CD8-positive, alpha-beta memory T cell (primary cell): ENCODE measurements at regions of chr7 and their contacts with region 1.

Region 1: DNA sequence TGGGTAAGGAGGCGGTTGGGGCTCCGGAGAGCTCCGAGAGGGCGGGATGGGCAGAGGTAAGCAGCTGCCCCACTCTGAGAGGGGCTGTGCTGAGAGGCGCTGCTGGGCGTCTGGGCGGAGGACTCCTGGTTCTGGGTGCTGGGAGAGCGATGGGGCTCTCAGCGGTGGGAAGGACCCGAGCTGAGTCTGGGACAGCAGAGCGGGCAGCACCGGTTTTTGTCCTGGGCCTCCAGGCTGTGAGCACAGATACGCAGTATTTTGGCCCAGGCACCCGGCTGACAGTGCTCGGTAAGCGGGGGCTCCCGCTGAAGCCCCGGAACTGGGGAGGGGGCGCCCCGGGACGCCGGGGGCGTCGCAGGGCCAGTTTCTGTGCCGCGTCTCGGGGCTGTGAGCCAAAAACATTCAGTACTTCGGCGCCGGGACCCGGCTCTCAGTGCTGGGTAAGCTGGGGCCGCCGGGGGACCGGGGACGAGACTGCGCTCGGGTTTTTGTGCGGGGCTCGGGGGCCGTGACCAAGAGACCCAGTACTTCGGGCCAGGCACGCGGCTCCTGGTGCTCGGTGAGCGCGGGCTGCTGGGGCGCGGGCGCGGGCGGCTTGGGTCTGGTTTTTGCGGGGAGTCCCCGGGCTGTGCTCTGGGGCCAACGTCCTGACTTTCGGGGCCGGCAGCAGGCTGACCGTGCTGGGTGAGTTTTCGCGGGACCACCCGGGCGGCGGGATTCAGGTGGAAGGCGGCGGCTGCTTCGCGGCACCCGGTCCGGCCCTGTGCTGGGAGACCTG is 26.0 kb downstream of the PRSS2 start:
- DNase-seq: no peak
- H3K4me3 ChIP-seq: peak overlapping the region; percentile 79
- H3K4me3 Mint-ChIP-seq: peak overlapping the region; percentile 92 to 100 (median 100)
- H3K27ac ChIP-seq: peak overlapping the region; percentile 95
- H3K27ac Mint-ChIP-seq: peak overlapping the region; percentile 94 to 100 (median 100)
- H3K4me1 ChIP-seq: peaks cover 57% of the 10 kb centered on the region
- H3K4me1 Mint-ChIP-seq: peaks cover 61 to 73% (median 69%) of the 10 kb centered on the region in 3 donors
- H3K27me3 ChIP-seq: no peaks in the 10 kb centered on the region
- H3K27me3 Mint-ChIP-seq: peaks cover 0 to 16% of the 10 kb centered on the region in 2 donors

Region 2: DNA sequence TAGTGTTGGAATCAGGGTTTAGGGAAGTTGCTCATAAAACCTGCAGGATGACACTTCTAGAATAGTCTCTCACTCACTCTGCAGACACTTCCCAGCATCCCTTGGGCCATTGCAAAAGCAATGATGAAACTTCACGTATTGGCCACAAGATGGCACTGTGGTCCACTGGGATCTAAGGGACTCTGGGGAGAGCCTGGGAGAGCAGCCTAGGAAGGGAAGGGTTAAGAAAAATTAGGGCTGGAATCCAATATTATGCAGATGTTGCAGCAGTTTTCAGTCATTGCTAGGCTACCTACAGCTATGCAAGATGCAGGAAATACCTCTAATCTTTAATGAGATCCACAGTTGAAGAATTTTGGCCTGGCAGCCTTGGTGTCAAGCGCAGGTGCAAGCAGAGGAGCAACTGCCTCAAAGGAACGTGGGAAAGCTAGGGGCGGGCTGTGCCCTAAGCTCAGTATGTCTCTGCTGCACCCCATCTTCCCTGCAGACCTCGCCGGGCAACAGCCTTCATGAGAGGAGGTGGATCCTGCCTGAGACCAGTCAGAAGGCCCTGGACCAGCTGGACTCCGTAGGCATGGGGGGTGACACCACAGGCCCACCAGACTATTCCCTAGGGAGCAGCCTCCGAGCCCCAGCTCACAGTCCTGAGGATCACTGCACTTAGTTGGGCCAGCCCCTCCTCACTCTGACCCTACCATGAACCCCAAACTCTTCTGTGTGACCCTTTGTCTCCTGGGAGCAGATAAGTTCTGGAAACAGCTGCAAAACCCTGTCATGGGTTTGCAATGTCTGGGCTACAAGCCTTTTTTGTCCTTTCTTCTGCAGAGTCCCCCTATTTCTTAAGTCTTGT is 411.1 kb before region 1 on chr7:
- CTCF ChIA-PET with region 1: interaction called, 3 read pairs
- POLR2A ChIA-PET with region 1: interaction called, 11 read pairs
- DNase-seq: peak in 3 of 5 donors; percentile 4 to 61 (median 35)
- H3K4me3 ChIP-seq: no peak overlapping the region
- H3K4me3 Mint-ChIP-seq: peak overlapping the region in 1 of 7 donors; percentile 49
- H3K27ac ChIP-seq: no peak overlapping the region
- H3K27ac Mint-ChIP-seq: peak overlapping the region in 2 of 8 donors; percentile 2 to 46
- H3K4me1 ChIP-seq: peaks cover 18% of the 10 kb centered on the region
- H3K4me1 Mint-ChIP-seq: peaks cover 19 to 27% (median 20%) of the 10 kb centered on the region in 3 donors
- H3K27me3 ChIP-seq: no peaks in the 10 kb centered on the region
- H3K27me3 Mint-ChIP-seq: no peaks in the 10 kb centered on the region

Region 3: DNA sequence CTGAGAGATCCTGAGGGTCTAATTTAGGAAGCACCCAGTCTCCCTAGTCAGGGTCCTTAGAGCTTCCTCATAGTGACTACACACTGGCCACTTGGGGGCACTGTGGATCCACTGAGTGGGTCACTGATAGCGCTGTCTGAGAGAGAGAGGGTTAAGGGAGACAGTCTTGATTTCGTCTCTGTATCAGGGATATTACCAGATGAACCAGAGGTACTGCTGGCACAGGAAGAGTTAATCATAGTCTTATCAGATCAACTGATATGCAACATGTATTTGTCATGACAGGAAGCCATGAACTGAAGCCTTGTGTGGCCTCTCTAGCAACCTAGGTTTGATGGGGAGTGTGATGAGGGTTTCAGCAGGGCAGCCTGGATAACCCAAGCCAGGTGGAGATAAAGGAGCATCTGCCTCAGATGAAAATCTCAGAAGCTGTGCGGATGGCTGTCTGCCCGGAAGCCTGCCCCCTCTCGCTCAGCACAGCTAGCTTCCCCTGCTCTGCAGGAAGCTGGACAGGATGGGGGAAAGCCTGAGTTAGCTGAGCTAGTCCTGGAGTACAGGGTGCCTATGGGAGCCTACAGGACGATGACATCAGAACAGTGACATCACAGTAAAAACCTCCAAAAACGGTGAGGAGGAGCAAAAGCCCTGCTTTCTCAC is 261.5 kb before region 1 on chr7:
- CTCF ChIA-PET with region 1: no interaction called
- POLR2A ChIA-PET with region 1: interaction called, 10 read pairs
- DNase-seq: peak; percentile 28 to 78 (median 46)
- H3K4me3 ChIP-seq: peak overlapping the region; percentile 19
- H3K4me3 Mint-ChIP-seq: peak overlapping the region; percentile 48 to 78 (median 61)
- H3K27ac ChIP-seq: no peak overlapping the region
- H3K27ac Mint-ChIP-seq: peak overlapping the region in 6 of 8 donors; percentile 17 to 89 (median 52)
- H3K4me1 ChIP-seq: peaks cover 9% of the 10 kb centered on the region
- H3K4me1 Mint-ChIP-seq: peaks cover 11 to 23% (median 22%) of the 10 kb centered on the region in 3 donors
- H3K27me3 ChIP-seq: no peaks in the 10 kb centered on the region
- H3K27me3 Mint-ChIP-seq: no peaks in the 10 kb centered on the region

Region 4: GRCh38 chr7:142554560-142555532 is 242.0 kb before region 1 on chr7:
- CTCF ChIA-PET with region 1: interaction called, 4 read pairs
- POLR2A ChIA-PET with region 1: interaction called, 10 read pairs
- DNase-seq: no peak
- H3K4me3 ChIP-seq: no peak overlapping the region
- H3K4me3 Mint-ChIP-seq: peak overlapping the region in 2 of 7 donors; percentile 10 to 32
- H3K27ac ChIP-seq: no peak overlapping the region
- H3K27ac Mint-ChIP-seq: peak overlapping the region in 2 of 8 donors; percentile 5 to 71
- H3K4me1 ChIP-seq: no peaks in the 10 kb centered on the region
- H3K4me1 Mint-ChIP-seq: peaks cover 0 to 6% (median 5%) of the 10 kb centered on the region in 3 donors
- H3K27me3 ChIP-seq: no peaks in the 10 kb centered on the region
- H3K27me3 Mint-ChIP-seq: peaks cover 0 to 10% of the 10 kb centered on the region in 2 donors

Region 5: GRCh38 chr7:142782922-142783900 is 13.6 kb before region 1 on chr7:
- CTCF ChIA-PET with region 1: interaction called, 508 read pairs
- POLR2A ChIA-PET with region 1: interaction called, 392 read pairs
- DNase-seq: peak; percentile 60 to 85 (median 74)
- H3K4me3 ChIP-seq: peak overlapping the region; percentile 49
- H3K4me3 Mint-ChIP-seq: peak overlapping the region; percentile 79 to 91 (median 83)
- H3K27ac ChIP-seq: no peak overlapping the region
- H3K27ac Mint-ChIP-seq: peak overlapping the region; percentile 84 to 100 (median 94)
- H3K4me1 ChIP-seq: peaks cover 9% of the 10 kb centered on the region
- H3K4me1 Mint-ChIP-seq: peaks cover 9 to 21% (median 15%) of the 10 kb centered on the region in 3 donors
- H3K27me3 ChIP-seq: no peaks in the 10 kb centered on the region
- H3K27me3 Mint-ChIP-seq: no peaks in the 10 kb centered on the region